Endothelial cell of umbilical vein (primary cell): ENCODE measurements at regions of chr4 and their contacts with region 1.

Region 1: GRCh38 chr4:109444182-109444844 is 10.7 kb downstream of the SEC24B start:
- DNase-seq: no peak
- H3K4me3 ChIP-seq: no peak overlapping the region
- H3K27ac ChIP-seq: no peak overlapping the region
- H3K4me1 ChIP-seq: peaks cover 11% of the 10 kb centered on the region
- H3K27me3 ChIP-seq: no peaks in the 10 kb centered on the region
- CTCF ChIP-seq: no peak
- POLR2A ChIP-seq: no peak

Region 2: GRCh38 chr4:109532182-109532581 is 87.9 kb after region 1 on chr4:
- CTCF ChIA-PET with region 1: no interaction called
- POLR2A ChIA-PET with region 1: no interaction called
- dilution Hi-C with region 1: no loop called
- intact Hi-C with region 1: loop called (anchors 5 kb)
- DNase-seq: no peak
- H3K4me3 ChIP-seq: no peak overlapping the region
- H3K27ac ChIP-seq: no peak overlapping the region
- H3K4me1 ChIP-seq: no peaks in the 10 kb centered on the region
- H3K27me3 ChIP-seq: no peaks in the 10 kb centered on the region
- CTCF ChIP-seq: no peak
- POLR2A ChIP-seq: no peak

Region 3: GRCh38 chr4:109548655-109549054 is 104.3 kb after region 1 on chr4:
- CTCF ChIA-PET with region 1: no interaction called
- POLR2A ChIA-PET with region 1: no interaction called
- dilution Hi-C with region 1: no loop called
- intact Hi-C with region 1: no loop called
- DNase-seq: peak; percentile 94
- H3K4me3 ChIP-seq: peak overlapping the region in 1 of 3 experiments; percentile 1
- H3K27ac ChIP-seq: peak overlapping the region; percentile 84
- H3K4me1 ChIP-seq: peaks cover 17% of the 10 kb centered on the region
- H3K27me3 ChIP-seq: no peaks in the 10 kb centered on the region
- CTCF ChIP-seq: no peak
- POLR2A ChIP-seq: peak; percentile 36